ENCODE measurements at regions of chr6 and their contacts with region 1.

Region 1: DNA sequence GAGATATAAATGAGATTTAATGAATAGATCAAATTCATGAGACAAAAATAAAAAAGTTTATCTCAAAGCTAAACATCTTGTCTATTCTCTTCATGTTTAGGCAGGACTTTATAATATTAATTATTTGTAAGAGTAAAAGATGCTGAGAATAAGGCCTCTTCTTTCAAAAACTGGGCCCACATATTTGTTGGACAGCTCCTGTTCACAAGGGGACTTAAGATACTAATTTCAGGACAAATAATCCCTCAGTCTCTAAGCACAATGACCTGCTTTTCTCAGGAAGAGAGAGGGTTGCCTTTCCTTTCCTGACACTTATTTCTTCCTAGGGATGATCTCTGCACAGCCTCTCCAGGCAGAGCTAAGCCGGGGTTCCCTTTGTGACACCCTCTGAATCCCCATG is 43.3 kb downstream of the NOX3 start:
- DNase-seq: no peak
- ATAC-seq: no peak
- H3K4me3 ChIP-seq: no peak overlapping the region
- H3K27ac ChIP-seq: no peak overlapping the region
- H3K4me1 ChIP-seq: 0 out of 2 replicates have a peak, but pooled peaks cover 2% of the 10 kb centered on the region
- H3K27me3 ChIP-seq: no peaks in the 10 kb centered on the region
- CTCF ChIP-seq: no peak
- EP300 ChIP-seq: no peak
- POLR2A ChIP-seq: no peak
- RAD21 ChIP-seq: no peak

Region 2: DNA sequence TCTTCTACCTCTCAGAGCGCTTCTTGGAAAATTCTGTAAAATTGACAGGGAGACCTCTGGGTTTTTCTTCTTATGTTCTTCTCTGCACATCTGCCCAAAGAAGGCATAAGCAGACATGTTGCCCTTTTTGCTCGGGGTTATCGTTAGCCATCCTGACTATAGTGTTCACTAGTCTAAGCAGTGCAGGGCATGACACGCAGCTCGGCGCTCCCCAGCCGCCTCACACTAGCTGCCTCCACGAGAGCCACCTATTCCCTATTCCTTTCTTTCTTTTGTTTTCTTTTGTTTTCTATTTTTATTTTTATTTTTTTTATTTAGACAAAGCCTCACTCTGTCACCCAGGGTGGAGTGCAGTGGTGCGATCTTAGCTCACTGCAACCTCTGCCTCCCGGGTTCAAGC is 1473.5 kb before region 1 on chr6:
- CTCF ChIA-PET with region 1: no interaction called
- POLR2A ChIA-PET with region 1: no interaction called
- RAD21 ChIA-PET with region 1: no interaction called
- SMC1A ChIA-PET with region 1: no interaction called
- in situ Hi-C with region 1: no loop called
- intact Hi-C with region 1: no loop called
- DNase-seq: no peak
- ATAC-seq: no peak
- H3K4me3 ChIP-seq: no peak overlapping the region
- H3K27ac ChIP-seq: no peak overlapping the region
- H3K4me1 ChIP-seq: no peaks in the 10 kb centered on the region
- H3K27me3 ChIP-seq: no peaks in the 10 kb centered on the region
- CTCF ChIP-seq: no peak
- EP300 ChIP-seq: no peak
- POLR2A ChIP-seq: no peak
- RAD21 ChIP-seq: no peak

Region 3: DNA sequence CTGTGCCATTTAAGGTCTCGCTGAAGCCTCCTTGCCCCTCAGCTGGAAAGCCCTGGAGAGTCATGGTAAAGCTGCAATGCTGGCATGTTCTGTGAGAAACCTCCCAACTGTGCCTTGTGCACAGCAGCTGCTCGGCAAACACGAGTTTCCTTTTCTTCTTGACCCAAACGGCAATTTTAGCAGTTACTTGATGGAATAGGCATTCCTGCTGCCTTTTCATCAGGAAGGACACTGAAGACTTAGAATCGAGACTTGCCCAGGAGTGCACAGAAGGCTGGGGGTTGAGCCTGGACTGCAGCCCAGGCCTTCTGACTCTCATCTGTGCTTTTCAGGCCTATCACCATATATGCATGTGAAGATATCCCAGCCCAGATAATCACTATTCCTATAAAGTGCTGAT is 177.2 kb before region 1 on chr6:
- CTCF ChIA-PET with region 1: no interaction called
- POLR2A ChIA-PET with region 1: no interaction called
- RAD21 ChIA-PET with region 1: no interaction called
- SMC1A ChIA-PET with region 1: no interaction called
- in situ Hi-C with region 1: no loop called
- intact Hi-C with region 1: no loop called
- DNase-seq: no peak
- ATAC-seq: no peak
- H3K4me3 ChIP-seq: no peak overlapping the region
- H3K27ac ChIP-seq: no peak overlapping the region
- H3K4me1 ChIP-seq: peaks cover 4% of the 10 kb centered on the region
- H3K27me3 ChIP-seq: no peaks in the 10 kb centered on the region
- CTCF ChIP-seq: no peak
- EP300 ChIP-seq: no peak
- POLR2A ChIP-seq: no peak
- RAD21 ChIP-seq: no peak

Region 4: GRCh38 chr6:155400654-155400965 is 11.7 kb before region 1 on chr6:
- CTCF ChIA-PET with region 1: no interaction called
- POLR2A ChIA-PET with region 1: no interaction called
- RAD21 ChIA-PET with region 1: interaction called, 4 read pairs
- SMC1A ChIA-PET with region 1: interaction called, 15 read pairs
- in situ Hi-C with region 1: no loop called
- intact Hi-C with region 1: no loop called
- DNase-seq: no peak
- ATAC-seq: no peak
- H3K4me3 ChIP-seq: no peak overlapping the region
- H3K27ac ChIP-seq: no peak overlapping the region
- H3K4me1 ChIP-seq: no peaks in the 10 kb centered on the region
- H3K27me3 ChIP-seq: no peaks in the 10 kb centered on the region
- CTCF ChIP-seq: no peak
- EP300 ChIP-seq: no peak
- POLR2A ChIP-seq: no peak
- RAD21 ChIP-seq: no peak

Region 5: GRCh38 chr6:155426408-155426945 is 14.1 kb after region 1 on chr6:
- CTCF ChIA-PET with region 1: interaction called, 10 read pairs
- POLR2A ChIA-PET with region 1: interaction called, 3 read pairs
- RAD21 ChIA-PET with region 1: interaction called, 3 read pairs
- SMC1A ChIA-PET with region 1: no interaction called
- in situ Hi-C with region 1: no loop called
- intact Hi-C with region 1: no loop called
- DNase-seq: no peak
- ATAC-seq: no peak
- H3K4me3 ChIP-seq: no peak overlapping the region
- H3K27ac ChIP-seq: no peak overlapping the region
- H3K4me1 ChIP-seq: no peaks in the 10 kb centered on the region
- H3K27me3 ChIP-seq: no peaks in the 10 kb centered on the region
- CTCF ChIP-seq: no peak
- EP300 ChIP-seq: no peak
- POLR2A ChIP-seq: no peak
- RAD21 ChIP-seq: no peak

Region 6: GRCh38 chr6:155481215-155481614 is 68.9 kb after region 1 on chr6:
- CTCF ChIA-PET with region 1: no interaction called
- POLR2A ChIA-PET with region 1: no interaction called
- RAD21 ChIA-PET with region 1: no interaction called
- SMC1A ChIA-PET with region 1: no interaction called
- in situ Hi-C with region 1: no loop called
- intact Hi-C with region 1: no loop called
- DNase-seq: no peak
- ATAC-seq: no peak
- H3K4me3 ChIP-seq: no peak overlapping the region
- H3K27ac ChIP-seq: no peak overlapping the region
- H3K4me1 ChIP-seq: no peaks in the 10 kb centered on the region
- H3K27me3 ChIP-seq: no peaks in the 10 kb centered on the region
- CTCF ChIP-seq: no peak
- EP300 ChIP-seq: no peak
- POLR2A ChIP-seq: no peak
- RAD21 ChIP-seq: no peak

Measured in GM12878 (cell line).